ENCODE measurements at regions of chr19 and their contacts with region 1.

Region 1: GRCh38 chr19:49676690-49677231 is 310 bp upstream of the PRMT1 start:
- DNase-seq: peak; percentile 99
- H3K4me3 Mint-ChIP-seq: peak overlapping the region; percentile 90
- H3K27ac Mint-ChIP-seq: peak overlapping the region; percentile 89
- H3K4me1 Mint-ChIP-seq: peaks cover 43% of the 10 kb centered on the region
- H3K27me3 Mint-ChIP-seq: no peaks in the 10 kb centered on the region

Region 2: GRCh38 chr19:49497047-49497788 is 179.5 kb before region 1 on chr19:
- CTCF ChIA-PET with region 1: interaction called, 61 read pairs
- POLR2A ChIA-PET with region 1: interaction called, 13 read pairs
- DNase-seq: peak; percentile 84
- H3K4me3 Mint-ChIP-seq: peak overlapping the region; percentile 98
- H3K27ac Mint-ChIP-seq: peak overlapping the region; percentile 99
- H3K4me1 Mint-ChIP-seq: peaks cover 67% of the 10 kb centered on the region
- H3K27me3 Mint-ChIP-seq: no peaks in the 10 kb centered on the region

Region 3: GRCh38 chr19:49546825-49547565 is 129.8 kb before region 1 on chr19:
- CTCF ChIA-PET with region 1: interaction called, 12 read pairs
- POLR2A ChIA-PET with region 1: interaction called, 5 read pairs
- DNase-seq: peak; percentile 69
- H3K4me3 Mint-ChIP-seq: peak overlapping the region; percentile 56
- H3K27ac Mint-ChIP-seq: peak overlapping the region; percentile 58
- H3K4me1 Mint-ChIP-seq: peaks cover 45% of the 10 kb centered on the region
- H3K27me3 Mint-ChIP-seq: peaks cover 6% of the 10 kb centered on the region

Region 4: DNA sequence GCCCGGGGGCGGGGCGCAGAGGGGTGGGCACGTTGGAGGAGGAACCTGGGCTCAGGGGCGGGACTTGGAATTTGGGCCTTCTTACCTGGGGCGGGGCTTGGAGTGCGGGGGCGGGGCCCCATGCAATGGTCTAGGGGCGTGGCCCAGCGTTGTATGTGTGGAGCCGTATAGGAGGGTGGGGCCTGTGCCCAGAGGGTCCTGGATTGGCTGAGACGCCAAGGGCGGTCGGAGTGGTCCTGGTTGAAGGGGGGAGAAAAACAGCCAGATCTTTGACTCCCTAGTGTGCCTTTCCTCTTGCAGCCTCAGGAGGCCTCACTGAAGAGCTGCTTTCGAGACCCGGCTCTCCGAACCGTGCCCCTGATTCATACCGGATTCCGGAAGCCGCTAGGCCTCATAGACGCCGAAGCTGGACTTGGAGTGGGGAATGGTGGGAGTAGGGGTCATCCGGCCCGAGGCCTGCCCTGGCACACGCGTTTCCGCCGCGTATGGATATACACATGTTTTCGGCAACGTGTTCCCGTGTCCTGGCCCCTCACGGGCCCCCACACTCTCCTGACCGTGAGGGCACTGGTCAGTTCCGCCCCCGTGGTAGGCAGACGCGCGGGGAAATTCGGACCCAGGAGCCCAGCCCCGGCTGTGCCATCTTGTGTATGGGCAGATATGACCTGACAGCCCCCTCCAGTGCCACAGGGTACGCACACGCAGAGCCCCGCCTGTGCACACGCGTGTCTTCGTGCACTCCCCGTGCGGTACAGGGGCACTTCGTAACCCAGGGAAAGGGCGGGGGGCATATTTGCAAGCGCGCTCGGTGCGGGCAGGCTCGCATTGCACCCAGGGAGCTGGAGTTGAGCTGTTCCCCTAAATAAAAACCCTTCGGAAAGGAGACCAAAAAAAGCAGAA is 86.4 kb before region 1 on chr19:
- CTCF ChIA-PET with region 1: interaction called, 6 read pairs
- POLR2A ChIA-PET with region 1: interaction called, 16 read pairs
- DNase-seq: peak; percentile 97
- H3K4me3 Mint-ChIP-seq: peak overlapping the region; percentile 79
- H3K27ac Mint-ChIP-seq: peak overlapping the region; percentile 80
- H3K4me1 Mint-ChIP-seq: peaks cover 37% of the 10 kb centered on the region
- H3K27me3 Mint-ChIP-seq: peaks cover 9% of the 10 kb centered on the region

Region 5: DNA sequence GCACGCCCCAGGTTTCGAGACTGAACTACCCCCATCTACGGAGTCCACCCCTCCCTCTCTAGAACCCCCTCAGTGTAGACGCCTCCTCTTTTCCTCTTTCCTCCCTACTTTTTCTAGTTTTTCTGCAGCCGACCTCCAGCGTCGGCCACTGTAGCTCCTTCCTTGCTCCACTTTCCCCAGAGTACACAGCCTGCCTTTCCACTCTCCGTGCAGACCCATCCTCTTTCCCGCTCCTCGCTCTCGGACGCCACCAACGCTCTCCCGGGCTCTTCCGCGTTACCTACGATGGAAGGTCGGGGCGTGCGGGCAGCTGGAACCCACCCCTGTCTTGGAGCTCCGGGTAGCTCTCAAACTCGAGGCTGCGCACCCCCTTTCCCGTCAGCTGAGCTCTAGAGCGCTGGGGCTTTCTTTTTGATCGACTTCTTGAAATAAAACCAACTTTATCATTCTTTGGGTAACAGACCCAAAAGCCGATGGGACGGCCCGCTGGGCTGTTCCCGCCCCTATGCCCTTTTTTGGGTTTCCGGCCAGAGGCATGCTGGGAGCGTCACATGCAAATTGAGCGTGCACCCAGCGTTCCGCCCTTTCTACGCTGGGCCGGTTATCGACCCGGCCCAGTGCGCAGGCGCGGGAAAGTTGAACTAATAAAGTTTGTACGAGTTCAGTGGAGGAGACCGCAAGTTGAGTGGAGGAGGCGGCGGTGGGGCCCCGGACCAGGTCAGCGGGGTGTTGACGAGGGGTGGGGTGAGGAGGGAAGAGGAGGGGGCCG is 11.2 kb before region 1 on chr19 and contains the starts of genes BCL2L12 and IRF3:
- CTCF ChIA-PET with region 1: interaction called, 26 read pairs
- POLR2A ChIA-PET with region 1: interaction called, 73 read pairs
- DNase-seq: peak; percentile 99
- H3K4me3 Mint-ChIP-seq: peak within 1 kb of the TSS; percentile 96
- H3K27ac Mint-ChIP-seq: peak within 1 kb of the TSS; percentile 93
- H3K4me1 Mint-ChIP-seq: peaks cover 38% of the 10 kb centered on the region
- H3K27me3 Mint-ChIP-seq: no peaks in the 10 kb centered on the region
- total RNA-seq, gene BCL2L12: 71.2 to 74.3 TPM
- total RNA-seq, gene IRF3: 163 to 174 TPM